ENCODE measurements at regions of chr17 and their contacts with region 1.

Region 1: GRCh38 chr17:48406936-48407567 is 23.0 kb downstream of the SKAP1 start:
- DNase-seq: peak; percentile 93
- H3K4me3 ChIP-seq: no peak overlapping the region
- H3K27ac ChIP-seq: peak overlapping the region; percentile 26
- H3K4me1 ChIP-seq: peaks cover 16% of the 10 kb centered on the region
- H3K27me3 ChIP-seq: peaks cover 34 to 48% of the 10 kb centered on the region in 2 experiments
- CTCF ChIP-seq: no peak
- POLR2A ChIP-seq: no peak

Region 2: DNA sequence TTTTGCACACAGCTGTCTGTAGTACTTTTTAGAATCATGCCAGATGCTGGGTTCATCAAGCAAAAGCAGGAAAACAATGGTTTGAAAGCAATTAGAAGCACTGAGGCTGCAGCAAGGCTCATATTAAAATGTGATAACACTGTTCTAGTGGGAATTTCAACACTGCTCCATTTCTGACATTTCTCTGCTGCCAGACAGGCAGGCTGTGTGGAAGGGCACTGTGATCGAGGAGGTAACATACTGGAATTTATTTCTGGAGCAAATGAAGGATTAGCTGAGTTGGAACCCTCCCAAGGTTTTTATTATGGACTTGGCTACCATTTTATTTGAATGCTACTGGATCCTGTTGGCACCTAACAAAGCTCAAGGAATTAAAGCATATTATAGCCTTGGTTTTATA is 43.9 kb before region 1 on chr17:
- CTCF ChIA-PET with region 1: no interaction called
- POLR2A ChIA-PET with region 1: no interaction called
- dilution Hi-C with region 1: no loop called
- intact Hi-C with region 1: loop called (anchors 5 kb)
- DNase-seq: no peak
- H3K4me3 ChIP-seq: no peak overlapping the region
- H3K27ac ChIP-seq: no peak overlapping the region
- H3K4me1 ChIP-seq: no peaks in the 10 kb centered on the region
- H3K27me3 ChIP-seq: peaks cover 34 to 40% of the 10 kb centered on the region in 2 experiments
- CTCF ChIP-seq: no peak
- POLR2A ChIP-seq: no peak

Region 3: DNA sequence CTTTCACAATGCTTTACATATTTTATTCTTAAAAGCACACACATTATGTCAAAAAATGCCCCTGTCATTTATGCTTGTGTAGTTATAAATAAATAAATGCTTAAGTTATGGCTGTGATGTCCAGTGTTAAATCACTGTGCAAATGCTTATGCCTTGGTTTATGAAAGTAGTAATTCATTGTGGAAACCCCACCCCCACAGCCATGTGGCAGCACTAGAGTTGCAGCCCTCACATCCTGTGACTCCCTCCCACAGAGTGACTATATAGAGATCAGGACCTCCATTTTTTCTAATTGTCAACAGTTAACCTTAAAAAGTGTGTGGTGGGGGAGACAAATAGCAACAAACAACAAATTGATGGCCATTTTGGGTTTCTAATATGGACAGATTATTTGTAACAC is 20.5 kb after region 1 on chr17:
- CTCF ChIA-PET with region 1: no interaction called
- POLR2A ChIA-PET with region 1: no interaction called
- dilution Hi-C with region 1: no loop called
- intact Hi-C with region 1: loop called (anchors 2 kb)
- DNase-seq: no peak
- H3K4me3 ChIP-seq: no peak overlapping the region
- H3K27ac ChIP-seq: no peak overlapping the region
- H3K4me1 ChIP-seq: peaks cover 12% of the 10 kb centered on the region
- H3K27me3 ChIP-seq: peaks cover 34 to 42% of the 10 kb centered on the region in 2 experiments
- CTCF ChIP-seq: no peak
- POLR2A ChIP-seq: no peak

Region 4: GRCh38 chr17:48441231-48441711 is 34.2 kb after region 1 on chr17:
- CTCF ChIA-PET with region 1: no interaction called
- POLR2A ChIA-PET with region 1: no interaction called
- dilution Hi-C with region 1: no loop called
- intact Hi-C with region 1: no loop called
- DNase-seq: no peak
- H3K4me3 ChIP-seq: no peak overlapping the region
- H3K27ac ChIP-seq: no peak overlapping the region
- H3K4me1 ChIP-seq: peaks cover 5% of the 10 kb centered on the region
- H3K27me3 ChIP-seq: peaks cover 24 to 28% of the 10 kb centered on the region in 2 experiments
- CTCF ChIP-seq: no peak
- POLR2A ChIP-seq: no peak

Region 5: DNA sequence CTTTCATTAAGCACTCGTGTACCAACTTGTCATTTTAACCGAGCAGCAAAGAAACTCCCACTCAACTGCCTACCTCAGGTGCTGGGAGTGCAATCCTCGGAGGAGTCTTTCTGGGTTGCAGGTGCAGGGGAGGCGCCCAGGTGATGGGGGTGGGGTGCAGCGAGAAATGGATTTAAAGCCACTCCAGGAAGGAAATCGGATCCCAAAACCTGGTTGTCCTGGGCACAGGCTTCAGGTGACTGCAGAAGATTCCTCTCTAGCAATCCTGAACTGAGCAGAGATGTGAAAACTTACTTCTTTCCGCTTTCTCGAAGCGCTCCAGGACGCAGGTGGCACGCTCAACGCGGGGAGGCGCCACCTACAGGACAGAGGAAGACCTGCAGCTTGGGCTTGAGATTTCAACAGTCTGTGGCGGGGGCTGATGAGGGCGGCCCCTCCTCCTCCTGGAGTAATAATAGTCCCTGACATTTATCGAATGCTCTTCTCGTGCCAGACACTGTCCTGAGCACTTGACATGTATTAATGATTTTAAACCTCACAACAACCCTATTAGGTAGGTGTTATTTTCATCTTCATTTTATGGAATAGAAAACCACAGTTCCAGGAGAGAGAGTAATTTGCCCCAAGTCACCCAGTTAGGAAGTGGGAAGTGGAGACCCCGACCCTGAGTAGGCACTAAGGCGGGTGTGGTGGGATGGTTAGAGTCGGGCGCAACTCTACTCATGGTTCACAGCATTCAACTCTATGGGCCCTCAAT is 50.2 kb after region 1 on chr17:
- CTCF ChIA-PET with region 1: interaction called, 10 read pairs
- POLR2A ChIA-PET with region 1: no interaction called
- dilution Hi-C with region 1: no loop called
- intact Hi-C with region 1: no loop called
- DNase-seq: peak; percentile 70
- H3K4me3 ChIP-seq: no peak overlapping the region
- H3K27ac ChIP-seq: no peak overlapping the region
- H3K4me1 ChIP-seq: no peaks in the 10 kb centered on the region
- H3K27me3 ChIP-seq: peaks cover 40 to 54% of the 10 kb centered on the region in 2 experiments
- CTCF ChIP-seq: peak; percentile 96 to 98
- POLR2A ChIP-seq: no peak